HepG2 (cell line): ENCODE measurements at regions of chr3 and their contacts with region 1.

Region 1: GRCh38 chr3:43997-44676 is 152.4 kb upstream of the CHL1 start:
- DNase-seq: peak; percentile 3
- ATAC-seq: peak; percentile 52; the same call in 2 of the 3 replicates
- H3K4me3 ChIP-seq: peak overlapping the region in 1 of 3 experiments; percentile 13; a peak in 1 of 6 replicates
- H3K27ac ChIP-seq: no peak overlapping the region
- H3K4me1 ChIP-seq: peaks cover 18% of the 10 kb centered on the region
- H3K27me3 ChIP-seq: no peaks in the 10 kb centered on the region
- CTCF ChIP-seq: no peak
- EP300 ChIP-seq: no peak
- POLR2A ChIP-seq: no peak
- RAD21 ChIP-seq: no peak

Region 2: DNA sequence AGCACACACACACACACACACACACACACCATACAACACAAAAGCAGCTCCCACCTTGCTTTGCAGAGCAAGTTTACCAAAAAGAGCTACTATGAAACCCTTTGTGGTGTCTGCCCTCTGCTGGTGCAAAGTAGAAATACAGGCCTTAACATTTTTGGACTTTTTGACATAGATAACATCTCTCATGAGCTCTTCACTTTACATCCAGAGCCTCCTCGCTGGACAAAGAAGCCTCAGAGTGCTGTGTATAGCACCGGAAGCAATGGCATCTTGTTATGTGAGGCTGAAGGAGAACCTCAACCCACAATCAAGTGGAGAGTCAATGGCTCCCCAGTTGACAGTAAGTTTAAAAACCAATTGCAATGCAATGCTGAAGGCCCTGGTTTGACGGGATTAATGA is 310.3 kb after region 1 on chr3:
- CTCF ChIA-PET with region 1: interaction called, 33 read pairs
- POLR2A ChIA-PET with region 1: no interaction called
- in situ Hi-C with region 1: no loop called
- intact Hi-C with region 1: loop called (anchors 1 kb)
- DNase-seq: peak; percentile 56
- ATAC-seq: peak; percentile 63
- H3K4me3 ChIP-seq: no peak overlapping the region
- H3K27ac ChIP-seq: no peak overlapping the region
- H3K4me1 ChIP-seq: no peaks in the 10 kb centered on the region
- H3K27me3 ChIP-seq: no peaks in the 10 kb centered on the region
- CTCF ChIP-seq: peak; percentile 81
- EP300 ChIP-seq: no peak
- POLR2A ChIP-seq: no peak
- RAD21 ChIP-seq: peak; percentile 74

Region 3: GRCh38 chr3:377158-377561 is 333.0 kb after region 1 on chr3:
- CTCF ChIA-PET with region 1: interaction called, 4 read pairs
- POLR2A ChIA-PET with region 1: no interaction called
- in situ Hi-C with region 1: no loop called
- intact Hi-C with region 1: loop called (anchors 1 kb)
- DNase-seq: peak; percentile 42
- ATAC-seq: peak; percentile 57
- H3K4me3 ChIP-seq: no peak overlapping the region
- H3K27ac ChIP-seq: no peak overlapping the region
- H3K4me1 ChIP-seq: no peaks in the 10 kb centered on the region
- H3K27me3 ChIP-seq: no peaks in the 10 kb centered on the region
- CTCF ChIP-seq: peak; percentile 65
- EP300 ChIP-seq: no peak
- POLR2A ChIP-seq: no peak
- RAD21 ChIP-seq: 0 out of 2 replicates have a peak, but pooled peaks have one; percentile 17